Posterior cingulate gyrus (tissue), 11 donors: ENCODE measurements at regions of chr13 and their contacts with region 1.

Region 1: GRCh38 chr13:31424117-31424729 is 224.4 kb downstream of the B3GLCT start:
- DNase-seq: peak; percentile 58 to 97 (median 76)

Region 2: DNA sequence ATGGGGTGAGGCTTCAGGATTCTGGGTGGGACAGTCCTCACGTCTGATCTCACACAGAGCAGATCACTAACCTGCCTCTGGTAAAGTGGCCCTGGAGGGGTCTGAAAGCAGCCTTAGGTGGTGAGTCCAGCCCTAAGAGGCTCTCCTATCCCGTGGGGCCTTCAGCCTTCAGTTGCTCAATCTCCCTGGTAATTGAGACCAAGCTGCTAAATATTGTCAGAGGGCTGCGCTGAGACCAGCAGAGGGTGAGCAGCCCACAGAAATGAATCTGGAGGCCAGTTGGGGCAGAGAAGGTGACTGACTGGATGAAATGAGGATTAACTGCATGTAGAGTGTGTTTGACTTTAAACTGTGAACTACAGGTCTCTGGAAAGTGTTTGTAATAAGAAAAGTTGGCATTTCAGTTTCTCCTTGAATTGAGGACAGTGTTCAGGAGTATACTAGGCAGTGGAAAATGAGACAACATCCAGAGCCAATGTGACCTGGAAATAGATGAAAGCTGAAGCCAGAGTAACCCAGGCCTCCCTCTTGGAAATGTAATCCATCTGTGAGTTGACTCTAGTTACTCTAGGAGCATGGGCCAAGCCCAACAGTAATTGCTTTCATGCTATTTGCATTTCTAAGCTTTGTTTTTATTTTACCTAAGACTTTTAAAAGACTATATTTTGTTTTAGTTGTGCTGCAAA is 248.2 kb before region 1 on chr13:
- intact Hi-C with region 1: loop called (anchors 5 kb)
- DNase-seq: no peak

Region 3: GRCh38 chr13:31236211-31236786 is 187.9 kb before region 1 on chr13:
- intact Hi-C with region 1: loop called (anchors 1 kb)
- DNase-seq: no peak